ENCODE measurements at regions of chr1 and their contacts with region 1.

Region 1: GRCh38 chr1:205273551-205273982 is 45.8 kb downstream of the TMCC2 start:
- DNase-seq: peak; percentile 90
- ATAC-seq: peak; percentile 90
- H3K4me3 ChIP-seq: no peak overlapping the region
- H3K27ac ChIP-seq: no peak overlapping the region
- H3K4me1 ChIP-seq: peaks cover 16% of the 10 kb centered on the region
- H3K27me3 ChIP-seq: no peaks in the 10 kb centered on the region
- CTCF ChIP-seq: peak; percentile 99

Region 2: GRCh38 chr1:205326812-205327466 is 53.4 kb after region 1 on chr1:
- intact Hi-C with region 1: loop called (anchors 2 kb)
- DNase-seq: no peak
- ATAC-seq: no peak
- H3K4me3 ChIP-seq: no peak overlapping the region
- H3K27ac ChIP-seq: no peak overlapping the region
- H3K4me1 ChIP-seq: peaks cover 12% of the 10 kb centered on the region
- H3K27me3 ChIP-seq: no peaks in the 10 kb centered on the region
- CTCF ChIP-seq: no peak